Kidney (tissue), 22 donors: ENCODE measurements at regions of chr10 and their contacts with region 1.

Region 1: DNA sequence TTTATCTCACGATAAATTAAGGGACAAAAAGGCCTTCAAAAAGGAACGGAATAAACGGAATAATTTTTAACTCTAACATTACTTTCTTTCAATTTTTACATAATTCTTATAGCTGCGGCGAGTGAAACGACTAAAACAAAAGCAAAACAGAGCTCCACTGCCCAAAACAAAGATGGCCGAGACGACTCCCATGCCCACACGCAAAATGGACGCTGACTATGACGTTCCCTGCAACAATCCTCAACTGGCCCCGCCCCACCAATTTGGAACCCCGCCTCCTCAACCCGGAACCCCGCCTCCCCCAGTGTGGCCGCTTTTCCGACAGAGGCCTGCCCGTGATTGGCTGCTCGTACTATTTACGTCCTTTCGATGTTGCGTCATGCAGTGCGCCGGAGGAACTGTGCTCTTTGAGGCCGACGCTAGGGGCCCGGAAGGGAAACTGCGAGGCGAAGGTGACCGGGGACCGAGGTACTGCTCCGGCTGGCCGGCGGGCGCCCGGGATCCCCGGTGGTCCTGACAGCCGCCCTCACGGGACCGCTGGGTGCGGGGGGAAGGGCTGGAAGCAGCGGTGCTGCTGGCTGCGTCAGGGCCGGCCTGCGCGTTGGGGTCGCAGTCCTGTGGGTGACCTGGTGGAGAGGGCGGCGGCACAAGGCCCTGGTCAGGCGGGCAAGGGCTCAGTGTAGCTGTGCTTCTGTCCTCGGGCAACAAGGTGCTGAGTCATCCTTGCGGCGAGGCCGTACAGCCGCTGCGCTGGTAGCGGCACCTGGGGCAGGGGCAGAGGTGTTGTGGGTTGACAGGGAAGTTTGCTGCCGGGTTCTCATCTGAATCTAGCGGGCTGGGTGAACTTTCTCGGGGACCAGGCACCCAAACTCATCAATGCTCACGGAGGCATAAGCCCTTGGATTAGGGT is at the start of gene GHITM:
- DNase-seq: peak; percentile 99 to 100 (median 99)
- H3K4me3 ChIP-seq: peak within 1 kb of the TSS; percentile 97 to 98 (median 97)
- H3K27ac ChIP-seq: peak within 1 kb of the TSS; percentile 97 to 98
- H3K4me1 ChIP-seq: peaks cover 2 to 11% (median 7%) of the 10 kb centered on the region in 3 donors
- H3K27me3 ChIP-seq: no peaks in the 10 kb centered on the region
- CTCF ChIP-seq: peak; percentile 17
- total RNA-seq, gene GHITM: 134 TPM

Region 2: GRCh38 chr10:84205049-84205852 is 65.9 kb after region 1 on chr10:
- intact Hi-C with region 1: loop called (anchors 10 kb)
- DNase-seq: peak in 4 of 5 donors; percentile 46 to 72 (median 64)
- H3K4me3 ChIP-seq: no peak overlapping the region
- H3K27ac ChIP-seq: no peak overlapping the region
- H3K4me1 ChIP-seq: no peaks in the 10 kb centered on the region
- H3K27me3 ChIP-seq: no peaks in the 10 kb centered on the region
- CTCF ChIP-seq: peak; percentile 71

Region 3: GRCh38 chr10:84224411-84225028 is 85.1 kb after region 1 on chr10:
- intact Hi-C with region 1: no loop called
- DNase-seq: peak in 3 of 5 donors; percentile 60 to 65 (median 61)
- H3K4me3 ChIP-seq: no peak overlapping the region
- H3K27ac ChIP-seq: no peak overlapping the region
- H3K4me1 ChIP-seq: no peaks in the 10 kb centered on the region
- H3K27me3 ChIP-seq: no peaks in the 10 kb centered on the region
- CTCF ChIP-seq: no peak